Activated CD4-positive, alpha-beta T cell treated with anti-CD3 and anti-CD28 coated beads, Interleukin-2, amount 10 ng/mL, durations not matched to agents 24 days and 14 days (primary cell): ENCODE measurements at regions of chr7 and their contacts with region 1.

Region 1: GRCh38 chr7:518630-519483 is 789 bp downstream of the PDGFA start:
- DNase-seq: peak; percentile 82
- H3K4me3 Mint-ChIP-seq: peak overlapping the region; percentile 83
- H3K27ac Mint-ChIP-seq: peak overlapping the region; percentile 71
- H3K4me1 Mint-ChIP-seq: peaks cover 12% of the 10 kb centered on the region
- H3K27me3 Mint-ChIP-seq: peaks cover 38% of the 10 kb centered on the region

Region 2: GRCh38 chr7:362402-363096 is 156.3 kb before region 1 on chr7:
- intact Hi-C with region 1: loop called (anchors 5 kb)
- DNase-seq: peak; percentile 82
- H3K4me3 Mint-ChIP-seq: peak overlapping the region; percentile 87
- H3K27ac Mint-ChIP-seq: peak overlapping the region; percentile 90
- H3K4me1 Mint-ChIP-seq: peaks cover 49% of the 10 kb centered on the region
- H3K27me3 Mint-ChIP-seq: no peaks in the 10 kb centered on the region

Region 3: GRCh38 chr7:584122-584465 is 65.2 kb after region 1 on chr7:
- intact Hi-C with region 1: loop called (anchors 5 kb)
- DNase-seq: peak; percentile 95
- H3K4me3 Mint-ChIP-seq: peak overlapping the region; percentile 86
- H3K27ac Mint-ChIP-seq: peak overlapping the region; percentile 98
- H3K4me1 Mint-ChIP-seq: peaks cover 35% of the 10 kb centered on the region
- H3K27me3 Mint-ChIP-seq: no peaks in the 10 kb centered on the region